CD8-positive, alpha-beta memory T cell (primary cell): ENCODE measurements at regions of chr11 and their contacts with region 1.

Region 1: DNA sequence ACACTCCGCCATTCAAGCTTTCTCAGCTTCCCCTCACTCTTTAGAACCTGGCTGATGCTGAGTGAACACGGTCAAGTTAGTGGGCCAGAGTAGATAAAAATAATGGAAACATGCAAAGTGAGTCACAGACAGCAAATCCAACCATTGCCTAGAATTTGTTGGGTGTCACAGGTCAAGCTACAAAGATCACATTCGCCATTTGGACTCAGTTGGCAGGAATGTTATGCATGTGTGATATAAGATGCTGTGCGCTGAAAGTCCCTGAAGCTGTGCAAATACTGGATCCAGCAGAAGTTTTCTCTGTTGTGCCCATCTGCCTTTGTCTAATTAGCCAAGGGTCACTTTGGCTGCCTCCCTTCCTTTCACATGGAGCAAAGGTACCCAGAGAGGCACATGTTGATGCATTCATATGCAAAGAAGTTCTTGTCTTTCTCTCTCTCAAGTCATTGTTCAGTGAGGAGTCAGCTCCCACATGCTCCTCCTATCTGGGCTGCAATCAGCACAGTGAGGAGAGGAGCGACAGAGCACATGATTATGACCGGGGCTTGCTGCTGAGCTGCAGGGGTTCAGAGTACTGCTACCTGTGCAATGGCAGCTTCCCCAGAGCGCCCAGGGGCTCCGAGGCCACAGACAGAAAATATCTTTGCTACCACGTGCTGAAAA is 39.7 kb downstream of the FLI1 start:
- DNase-seq: peak in 2 of 5 donors; percentile 26 to 55
- H3K4me3 ChIP-seq: peak overlapping the region; percentile 31
- H3K4me3 Mint-ChIP-seq: peak overlapping the region; percentile 65 to 86 (median 83)
- H3K27ac ChIP-seq: no peak overlapping the region
- H3K27ac Mint-ChIP-seq: peak overlapping the region; percentile 76 to 96 (median 90)
- H3K4me1 ChIP-seq: peaks cover 97% of the 10 kb centered on the region
- H3K4me1 Mint-ChIP-seq: peaks cover 95 to 100% (median 100%) of the 10 kb centered on the region in 3 donors
- H3K27me3 ChIP-seq: no peaks in the 10 kb centered on the region
- H3K27me3 Mint-ChIP-seq: no peaks in the 10 kb centered on the region

Region 2: GRCh38 chr11:128695539-128696221 is 37.9 kb before region 1 on chr11:
- CTCF ChIA-PET with region 1: interaction called, 11 read pairs
- POLR2A ChIA-PET with region 1: interaction called, 19 read pairs
- DNase-seq: peak in 3 of 5 donors; percentile 58 to 62 (median 61)
- H3K4me3 ChIP-seq: peak overlapping the region; percentile 67
- H3K4me3 Mint-ChIP-seq: peak overlapping the region; percentile 96 to 99 (median 96)
- H3K27ac ChIP-seq: peak overlapping the region; percentile 82
- H3K27ac Mint-ChIP-seq: peak overlapping the region; percentile 89 to 97 (median 94)
- H3K4me1 ChIP-seq: peaks cover 54% of the 10 kb centered on the region
- H3K4me1 Mint-ChIP-seq: peaks cover 59 to 73% (median 63%) of the 10 kb centered on the region in 3 donors
- H3K27me3 ChIP-seq: no peaks in the 10 kb centered on the region
- H3K27me3 Mint-ChIP-seq: peaks cover 0 to 16% of the 10 kb centered on the region in 2 donors

Region 3: DNA sequence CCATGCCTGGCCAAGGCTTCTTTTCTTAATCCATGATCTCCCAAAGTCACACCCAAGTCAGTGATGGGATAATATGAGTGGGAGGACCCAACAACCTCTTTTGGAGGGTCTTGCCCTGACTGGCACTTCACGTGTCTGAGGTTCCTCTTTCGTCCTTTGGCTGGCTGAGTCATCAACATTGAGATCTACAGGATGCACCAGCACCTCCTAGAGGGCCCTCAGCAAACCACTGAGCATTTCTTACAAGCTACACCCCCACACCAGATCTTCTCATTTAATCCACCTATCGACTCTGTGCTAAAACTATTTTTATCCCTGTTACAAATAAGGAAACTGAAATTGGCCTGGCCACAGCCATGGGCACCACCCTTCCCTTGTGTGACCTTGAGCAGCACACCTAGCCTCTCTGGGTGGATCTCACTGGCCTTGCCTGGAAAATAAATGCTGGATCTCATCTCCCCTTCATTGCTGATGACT is 23.7 kb after region 1 on chr11:
- CTCF ChIA-PET with region 1: interaction called, 23 read pairs
- POLR2A ChIA-PET with region 1: interaction called, 3 read pairs
- DNase-seq: peak; percentile 44 to 83 (median 67)
- H3K4me3 ChIP-seq: no peak overlapping the region
- H3K4me3 Mint-ChIP-seq: peak overlapping the region in 6 of 7 donors; percentile 36 to 65 (median 47)
- H3K27ac ChIP-seq: no peak overlapping the region
- H3K27ac Mint-ChIP-seq: peak overlapping the region; percentile 76 to 99 (median 90)
- H3K4me1 ChIP-seq: peaks cover 66% of the 10 kb centered on the region
- H3K4me1 Mint-ChIP-seq: peaks cover 79 to 93% (median 86%) of the 10 kb centered on the region in 3 donors
- H3K27me3 ChIP-seq: no peaks in the 10 kb centered on the region
- H3K27me3 Mint-ChIP-seq: peaks cover 0 to 2% of the 10 kb centered on the region in 2 donors

Region 4: DNA sequence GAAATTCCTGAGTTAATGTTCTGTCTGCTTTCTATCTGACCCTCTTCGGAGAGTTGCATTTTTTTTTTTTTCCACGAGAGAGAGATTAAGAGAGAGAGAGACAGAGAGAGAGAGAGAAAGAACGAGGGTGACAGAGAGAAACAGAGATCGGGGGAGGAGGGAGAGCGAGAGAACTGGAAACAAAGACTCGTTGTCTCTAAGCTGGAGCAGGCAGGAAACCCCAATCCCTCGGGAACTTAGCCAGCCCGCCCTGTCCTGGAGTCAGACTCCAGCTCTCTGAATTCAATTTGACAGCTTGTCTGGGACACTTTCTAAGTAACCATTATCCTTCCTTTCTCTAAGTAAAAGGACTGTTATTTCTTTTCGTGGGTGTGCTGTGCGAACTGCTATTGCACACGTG is 56.6 kb after region 1 on chr11:
- CTCF ChIA-PET with region 1: no interaction called
- POLR2A ChIA-PET with region 1: no interaction called
- DNase-seq: no peak
- H3K4me3 ChIP-seq: no peak overlapping the region
- H3K4me3 Mint-ChIP-seq: no peak overlapping the region
- H3K27ac ChIP-seq: no peak overlapping the region
- H3K27ac Mint-ChIP-seq: peak overlapping the region in 3 of 8 donors; percentile 40 to 70 (median 58)
- H3K4me1 ChIP-seq: no peaks in the 10 kb centered on the region
- H3K4me1 Mint-ChIP-seq: peaks cover 30 to 44% (median 41%) of the 10 kb centered on the region in 3 donors
- H3K27me3 ChIP-seq: no peaks in the 10 kb centered on the region
- H3K27me3 Mint-ChIP-seq: no peaks in the 10 kb centered on the region